ENCODE measurements at regions of chr9 and their contacts with region 1.

Region 1: DNA sequence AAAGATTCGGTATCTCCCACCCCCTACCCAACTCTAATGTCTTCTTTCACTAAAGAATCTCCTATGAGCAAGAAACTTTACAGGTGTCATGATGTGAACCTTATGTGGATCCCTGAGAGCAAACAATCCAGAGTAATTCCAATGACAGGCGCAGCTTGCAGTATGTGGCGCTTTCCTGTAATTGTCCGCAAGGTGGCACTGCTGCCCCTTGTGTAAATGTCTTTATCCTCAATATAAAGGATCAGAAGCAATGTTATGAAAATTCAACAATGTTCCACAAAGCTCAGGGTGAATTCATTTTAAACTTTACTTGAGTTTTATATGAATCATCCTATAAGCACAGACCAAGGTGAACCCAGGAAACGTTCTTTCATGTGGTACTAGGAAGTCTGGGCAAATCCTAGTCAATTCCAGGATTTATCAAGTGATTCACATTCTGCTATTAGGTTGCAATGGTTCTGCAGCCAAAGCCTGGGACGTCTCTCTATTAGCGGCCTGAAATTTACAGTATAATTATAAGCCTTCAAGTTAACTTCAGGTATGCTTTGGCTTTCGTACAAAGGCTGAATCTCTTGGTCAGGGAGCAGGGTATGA is 113.7 kb downstream of the TRPM6 start:
- DNase-seq: peak; percentile 64 to 80
- ATAC-seq: peak; percentile 65 to 86 (median 71)
- H3K4me3 ChIP-seq: no peak overlapping the region
- H3K27ac ChIP-seq: no peak overlapping the region
- H3K4me1 ChIP-seq: no peaks in the 10 kb centered on the region
- H3K27me3 ChIP-seq: peaks cover 0 to 8% (median 0%) of the 10 kb centered on the region in 3 donors
- CTCF ChIP-seq: peak; percentile 96

Region 2: DNA sequence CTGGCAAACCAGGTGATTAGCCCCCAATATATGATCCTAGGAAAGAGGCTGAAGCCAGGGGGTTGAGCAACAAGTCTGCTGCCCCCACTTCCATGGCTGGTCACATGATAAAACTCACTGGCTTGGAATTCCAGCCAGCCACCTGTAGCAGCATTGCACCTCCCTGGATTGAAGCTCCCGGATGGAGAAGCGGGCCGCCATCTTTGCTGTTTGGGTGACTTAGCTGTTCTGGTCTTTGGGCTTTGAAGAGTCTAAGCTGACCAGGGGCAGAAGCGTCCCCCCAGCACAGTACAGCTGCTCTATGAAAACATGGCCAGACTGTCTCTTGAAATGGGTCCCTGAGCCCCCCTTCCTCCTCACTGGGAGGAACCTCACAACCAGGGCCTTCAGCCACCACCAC is 1012.1 kb before region 1 on chr9:
- intact Hi-C with region 1: no loop called
- DNase-seq: no peak
- ATAC-seq: no peak
- H3K4me3 ChIP-seq: no peak overlapping the region
- H3K27ac ChIP-seq: no peak overlapping the region
- H3K4me1 ChIP-seq: no peaks in the 10 kb centered on the region
- H3K27me3 ChIP-seq: no peaks in the 10 kb centered on the region
- CTCF ChIP-seq: no peak

Region 3: GRCh38 chr9:74821636-74822035 is 47.7 kb after region 1 on chr9:
- intact Hi-C with region 1: no loop called
- DNase-seq: no peak
- ATAC-seq: no peak
- H3K4me3 ChIP-seq: no peak overlapping the region
- H3K27ac ChIP-seq: no peak overlapping the region
- H3K4me1 ChIP-seq: no peaks in the 10 kb centered on the region
- H3K27me3 ChIP-seq: no peaks in the 10 kb centered on the region
- CTCF ChIP-seq: no peak

Region 4: GRCh38 chr9:74946686-74947085 is 172.7 kb after region 1 on chr9:
- intact Hi-C with region 1: loop called in 1 of 2 experiments (anchors 2 kb)
- DNase-seq: no peak
- ATAC-seq: no peak
- H3K4me3 ChIP-seq: no peak overlapping the region
- H3K27ac ChIP-seq: no peak overlapping the region
- H3K4me1 ChIP-seq: peaks cover 6% of the 10 kb centered on the region
- H3K27me3 ChIP-seq: no peaks in the 10 kb centered on the region
- CTCF ChIP-seq: no peak

Region 5: GRCh38 chr9:75001719-75002422 is 227.9 kb after region 1 on chr9:
- intact Hi-C with region 1: loop called (anchors 1 to 2 kb)
- DNase-seq: no peak
- ATAC-seq: peak; percentile 67 to 92 (median 80)
- H3K4me3 ChIP-seq: no peak overlapping the region
- H3K27ac ChIP-seq: no peak overlapping the region
- H3K4me1 ChIP-seq: peaks cover 4% of the 10 kb centered on the region
- H3K27me3 ChIP-seq: no peaks in the 10 kb centered on the region
- CTCF ChIP-seq: peak; percentile 84

Region 6: DNA sequence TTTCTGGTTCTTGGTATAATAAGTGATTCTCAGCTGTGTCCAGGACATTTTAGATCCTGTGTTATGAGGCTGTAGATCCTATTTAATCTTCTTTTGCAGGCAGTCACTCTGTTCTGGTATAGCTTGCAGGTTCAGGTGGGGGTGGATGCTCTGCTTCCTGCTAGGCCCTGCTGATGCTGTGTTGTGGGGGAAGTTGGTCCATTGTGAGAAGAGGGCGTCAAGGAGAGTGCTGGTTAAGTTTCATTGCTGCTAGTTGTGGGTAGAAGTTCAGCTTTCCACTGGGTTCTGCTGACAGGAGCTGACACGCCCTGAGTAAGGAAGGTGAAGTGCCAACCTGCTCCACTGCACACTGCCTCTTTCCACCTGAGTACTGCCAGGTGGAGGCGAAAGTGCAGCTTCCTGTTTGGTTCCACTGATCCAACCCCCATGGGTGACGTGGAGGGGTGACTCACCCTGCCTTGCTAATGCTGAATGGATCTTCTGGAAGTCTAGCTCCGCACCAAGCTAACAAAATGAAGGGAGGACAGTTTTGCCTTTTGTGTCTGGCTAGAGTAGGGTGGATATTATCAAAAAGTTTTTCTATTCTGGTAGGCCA is 297.6 kb after region 1 on chr9:
- intact Hi-C with region 1: loop called in 1 of 2 experiments (anchors 2 kb)
- DNase-seq: no peak
- ATAC-seq: no peak
- H3K4me3 ChIP-seq: no peak overlapping the region
- H3K27ac ChIP-seq: no peak overlapping the region
- H3K4me1 ChIP-seq: no peaks in the 10 kb centered on the region
- H3K27me3 ChIP-seq: no peaks in the 10 kb centered on the region
- CTCF ChIP-seq: no peak

Region 7: DNA sequence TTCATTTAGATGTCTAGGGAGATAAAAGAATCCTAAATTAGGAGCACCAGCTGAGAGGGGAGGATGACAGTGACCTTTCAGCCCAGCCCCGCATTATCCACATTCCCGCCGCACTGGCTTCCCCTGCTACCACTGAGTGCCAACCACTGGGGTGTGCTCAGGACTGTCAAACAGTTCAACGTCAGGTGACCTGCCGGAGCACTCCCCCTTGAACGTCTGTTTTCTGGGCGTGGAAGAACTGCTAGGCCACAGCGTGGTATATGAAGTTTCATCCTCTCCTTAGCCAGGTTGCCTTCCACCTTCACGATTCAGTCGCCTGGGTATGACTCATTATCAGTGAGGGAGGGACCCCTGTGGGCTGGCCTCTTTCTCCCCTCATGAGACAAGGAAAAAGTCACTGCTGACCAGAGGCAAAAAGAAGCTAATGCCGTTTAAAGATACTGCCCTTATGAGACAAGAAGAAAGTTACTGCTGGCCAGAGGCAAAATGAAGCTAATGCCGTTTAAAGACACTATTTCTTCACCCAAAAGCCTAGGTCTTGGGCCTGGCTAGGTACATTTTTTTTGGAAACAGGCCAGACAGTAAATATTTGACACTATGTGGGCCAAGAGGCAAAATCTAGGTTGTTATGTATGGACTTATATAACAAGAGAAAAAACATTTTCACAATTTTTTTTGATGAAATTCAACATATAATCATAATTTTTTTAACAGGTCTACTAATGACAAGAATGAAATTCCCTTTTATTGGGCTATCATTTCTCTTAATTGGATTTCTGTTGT is 309.4 kb after region 1 on chr9:
- intact Hi-C with region 1: loop called in 1 of 2 experiments (anchors 2 kb)
- DNase-seq: no peak
- ATAC-seq: peak; percentile 35 to 62 (median 48)
- H3K4me3 ChIP-seq: peak overlapping the region; percentile 8
- H3K27ac ChIP-seq: peak overlapping the region; percentile 80
- H3K4me1 ChIP-seq: peaks cover 23% of the 10 kb centered on the region
- H3K27me3 ChIP-seq: no peaks in the 10 kb centered on the region
- CTCF ChIP-seq: no peak